ENCODE measurements at regions of chr11 and their contacts with region 1.

Region 1: DNA sequence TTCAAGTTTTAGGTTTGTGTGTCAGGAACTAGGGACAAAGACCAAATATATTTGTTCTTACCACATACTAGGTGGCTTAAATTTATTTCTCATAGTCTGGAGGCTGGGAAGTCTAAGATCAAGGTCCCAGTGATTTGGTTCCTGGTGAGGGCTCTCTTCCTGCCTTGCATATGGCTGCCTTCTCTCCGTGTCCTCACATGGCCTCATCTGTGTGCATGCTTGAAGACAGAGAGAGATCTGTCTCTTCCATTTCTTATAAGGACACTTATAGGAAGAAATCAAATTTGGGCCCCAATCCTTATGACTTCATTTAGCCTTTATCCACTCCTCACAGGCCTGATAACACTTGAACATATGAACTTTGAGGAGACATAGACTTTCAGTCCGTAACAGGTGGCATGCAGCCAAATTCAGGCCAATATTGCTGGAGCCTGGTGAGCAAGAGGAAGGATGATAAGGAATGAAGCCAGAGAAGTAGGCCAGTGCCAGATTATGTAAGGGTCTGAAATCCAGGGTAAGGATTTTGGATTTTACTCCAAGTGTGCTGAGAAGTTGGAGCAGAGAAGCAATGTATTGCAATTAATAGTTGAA is 35.1 kb downstream of the TTC17 start:
- DNase-seq: no peak
- H3K4me3 ChIP-seq: no peak overlapping the region
- H3K27ac ChIP-seq: no peak overlapping the region
- H3K4me1 ChIP-seq: no peaks in the 10 kb centered on the region
- H3K27me3 ChIP-seq: no peaks in the 10 kb centered on the region
- CTCF ChIP-seq: no peak

Region 2: DNA sequence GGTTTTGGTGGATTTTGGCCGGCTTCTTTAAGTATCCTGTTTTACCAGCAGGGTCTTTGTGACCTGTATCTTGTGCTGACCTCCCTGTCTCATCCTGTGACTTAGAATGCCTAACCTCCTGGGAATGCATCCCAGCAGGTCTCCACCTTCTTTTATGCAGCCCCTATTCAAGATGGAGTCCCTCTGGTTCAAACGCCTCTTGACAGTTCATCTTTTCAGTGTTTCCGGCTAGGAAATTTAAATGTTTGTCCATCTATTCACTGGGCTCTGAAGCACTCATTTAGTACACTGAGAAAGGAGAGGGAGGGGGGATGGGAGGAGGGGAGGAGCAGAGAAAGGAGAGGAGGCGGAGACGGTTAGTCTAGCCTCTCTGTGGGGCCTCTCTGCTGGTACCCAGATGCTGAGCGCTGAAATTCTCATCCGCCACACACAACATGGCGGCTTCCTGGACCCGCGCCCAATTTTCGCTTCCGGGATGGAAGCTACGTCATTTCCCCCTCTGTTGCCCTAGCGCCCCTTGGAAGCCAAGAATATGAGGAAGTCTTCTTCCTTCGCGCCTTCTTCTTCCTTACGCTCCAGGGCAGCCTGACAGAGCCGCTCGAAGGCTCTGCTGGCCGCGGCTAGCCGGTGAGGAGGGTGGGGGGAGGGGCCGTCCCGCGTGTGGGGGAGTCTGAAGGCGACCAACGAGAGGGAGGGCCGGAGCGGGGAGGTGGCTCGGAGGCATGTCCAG is 1961.3 kb after region 1 on chr11:
- CTCF ChIA-PET with region 1: interaction called, 11 read pairs
- dilution Hi-C with region 1: no loop called
- in situ Hi-C with region 1: no loop called
- intact Hi-C with region 1: no loop called
- DNase-seq: peak; percentile 30
- H3K4me3 ChIP-seq: peak overlapping the region in 1 of 3 experiments; percentile 20
- H3K27ac ChIP-seq: no peak overlapping the region
- H3K4me1 ChIP-seq: no peaks in the 10 kb centered on the region
- H3K27me3 ChIP-seq: no peaks in the 10 kb centered on the region
- CTCF ChIP-seq: no peak

Measured in mammary epithelial cell (primary cell).